PC-3 (cell line): ENCODE measurements at regions of chr4 and their contacts with region 1.

Region 1: DNA sequence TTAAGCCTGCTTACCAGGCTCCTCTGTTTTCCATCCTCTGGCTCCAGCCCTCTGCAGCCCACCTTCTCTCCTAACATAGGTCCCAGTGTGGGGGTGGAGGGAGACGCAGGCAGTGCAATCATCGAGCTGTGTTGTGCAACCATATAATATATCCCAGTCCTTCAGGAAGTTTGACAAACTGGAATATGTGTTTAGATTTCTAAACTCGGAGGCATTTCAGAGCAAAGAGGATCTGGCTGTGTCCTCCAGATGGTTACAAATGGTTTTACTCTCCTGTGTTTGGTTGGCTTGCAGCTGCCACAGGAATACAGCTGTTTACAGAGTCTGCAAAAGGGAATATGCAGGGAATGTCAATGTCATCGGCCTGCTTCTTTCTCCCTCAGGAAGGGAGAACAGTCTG is 195.3 kb upstream of the LNX1 start:
- DNase-seq: no peak
- ATAC-seq: no peak
- H3K4me3 ChIP-seq: no peak overlapping the region
- H3K27ac ChIP-seq: no peak overlapping the region
- H3K4me1 ChIP-seq: peaks cover 21% of the 10 kb centered on the region
- H3K27me3 ChIP-seq: no peaks in the 10 kb centered on the region
- CTCF ChIP-seq: no peak

Region 2: DNA sequence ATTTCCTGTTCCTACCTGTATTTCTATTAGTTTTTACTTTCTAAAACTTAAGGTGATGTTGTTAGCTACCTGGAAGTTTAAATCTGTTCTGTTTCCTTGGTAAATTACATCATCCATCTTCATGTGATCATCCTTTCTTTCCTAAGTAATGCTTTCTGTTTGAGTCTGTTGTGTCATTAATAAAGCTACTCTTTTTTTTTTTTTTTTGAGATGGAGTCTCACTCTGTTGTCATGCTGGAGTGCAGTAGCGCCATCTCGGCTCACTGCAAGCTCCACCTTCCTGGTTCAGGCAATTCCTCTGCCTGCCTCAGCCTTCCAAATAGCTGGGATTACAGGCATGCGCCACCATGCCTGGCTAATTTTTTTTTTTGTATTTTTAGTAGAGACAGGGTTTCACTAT is 335.9 kb before region 1 on chr4:
- CTCF ChIA-PET with region 1: interaction called, 12 read pairs
- POLR2A ChIA-PET with region 1: no interaction called
- intact Hi-C with region 1: no loop called
- DNase-seq: no peak
- ATAC-seq: no peak
- H3K4me3 ChIP-seq: no peak overlapping the region
- H3K27ac ChIP-seq: no peak overlapping the region
- H3K4me1 ChIP-seq: peaks cover 13% of the 10 kb centered on the region
- H3K27me3 ChIP-seq: no peaks in the 10 kb centered on the region
- CTCF ChIP-seq: no peak

Region 3: DNA sequence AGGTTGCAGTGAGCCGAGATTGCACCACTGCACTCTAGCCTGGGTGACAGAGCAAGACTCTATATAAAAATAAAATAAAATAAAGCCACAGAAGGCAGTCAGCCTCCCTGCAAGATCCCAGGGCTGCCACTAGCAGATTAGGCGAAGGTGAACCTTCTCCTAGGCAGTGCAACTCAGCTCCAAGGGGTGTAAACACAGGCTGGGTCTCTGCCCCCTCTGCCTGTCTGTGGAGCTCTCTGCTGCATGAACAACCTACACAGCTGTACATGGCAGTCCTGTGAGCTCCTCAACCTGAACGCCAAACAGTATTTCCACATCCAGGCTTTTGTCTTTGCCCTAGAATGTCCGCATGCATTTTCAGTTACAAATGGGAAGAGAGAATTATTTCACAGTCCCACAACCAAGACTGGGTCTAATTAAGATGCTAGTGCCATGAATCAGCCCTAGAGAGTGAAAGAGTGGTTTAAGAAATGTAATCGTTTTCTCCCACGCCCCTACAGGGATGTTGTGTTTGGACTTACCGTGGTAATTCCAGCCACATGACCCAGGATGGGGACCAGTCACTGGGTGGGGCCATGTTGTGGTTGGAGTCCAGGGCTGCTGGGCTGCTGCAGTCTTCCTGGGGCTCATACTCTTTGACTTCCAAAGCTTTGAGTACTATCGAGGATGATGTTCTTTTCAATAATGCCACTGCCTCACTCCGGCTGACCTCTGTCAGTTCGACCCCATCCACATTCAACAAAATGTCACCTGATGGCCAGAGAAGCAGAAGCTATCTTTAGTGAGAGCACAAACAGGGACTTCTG is 310.2 kb before region 1 on chr4:
- CTCF ChIA-PET with region 1: no interaction called
- POLR2A ChIA-PET with region 1: no interaction called
- intact Hi-C with region 1: loop called (anchors 10 kb)
- DNase-seq: peak; percentile 46
- ATAC-seq: no peak
- H3K4me3 ChIP-seq: no peak overlapping the region
- H3K27ac ChIP-seq: no peak overlapping the region
- H3K4me1 ChIP-seq: peaks cover 27% of the 10 kb centered on the region
- H3K27me3 ChIP-seq: no peaks in the 10 kb centered on the region
- CTCF ChIP-seq: no peak

Region 4: DNA sequence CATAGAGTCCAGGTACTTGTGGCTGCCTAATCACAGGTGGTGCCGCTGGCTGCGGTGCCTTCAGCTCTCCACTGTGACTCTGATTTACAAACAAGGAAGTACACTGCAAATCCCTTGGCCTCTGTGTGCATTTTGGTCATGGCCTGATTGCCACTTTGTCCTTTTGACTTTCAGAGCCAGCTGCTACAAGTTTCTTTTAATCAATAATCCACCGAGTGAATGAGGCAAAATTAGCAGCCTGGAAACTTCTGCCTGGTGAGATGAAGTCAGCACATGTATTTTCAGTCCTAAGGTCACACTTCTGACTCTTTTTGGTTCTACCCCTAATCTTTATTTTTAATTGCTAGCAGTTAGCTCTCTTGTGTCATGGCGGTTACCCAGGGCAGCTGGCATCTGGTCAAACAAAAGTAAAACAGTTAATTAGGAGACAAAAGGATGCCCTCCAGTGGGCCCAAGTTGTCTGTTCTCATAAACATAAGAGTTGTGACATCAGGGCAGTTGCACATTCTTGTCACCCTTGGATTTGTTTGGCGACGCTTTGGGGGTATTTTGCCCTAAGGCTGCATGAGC is 133.1 kb before region 1 on chr4:
- CTCF ChIA-PET with region 1: no interaction called
- POLR2A ChIA-PET with region 1: no interaction called
- intact Hi-C with region 1: loop called (anchors 5 kb)
- DNase-seq: no peak
- ATAC-seq: no peak
- H3K4me3 ChIP-seq: no peak overlapping the region
- H3K27ac ChIP-seq: no peak overlapping the region
- H3K4me1 ChIP-seq: peaks cover 15% of the 10 kb centered on the region; the same call in 1 of the 2 replicates
- H3K27me3 ChIP-seq: no peaks in the 10 kb centered on the region
- CTCF ChIP-seq: 0 out of 2 replicates have a peak, but pooled peaks have one; percentile 16

Region 5: DNA sequence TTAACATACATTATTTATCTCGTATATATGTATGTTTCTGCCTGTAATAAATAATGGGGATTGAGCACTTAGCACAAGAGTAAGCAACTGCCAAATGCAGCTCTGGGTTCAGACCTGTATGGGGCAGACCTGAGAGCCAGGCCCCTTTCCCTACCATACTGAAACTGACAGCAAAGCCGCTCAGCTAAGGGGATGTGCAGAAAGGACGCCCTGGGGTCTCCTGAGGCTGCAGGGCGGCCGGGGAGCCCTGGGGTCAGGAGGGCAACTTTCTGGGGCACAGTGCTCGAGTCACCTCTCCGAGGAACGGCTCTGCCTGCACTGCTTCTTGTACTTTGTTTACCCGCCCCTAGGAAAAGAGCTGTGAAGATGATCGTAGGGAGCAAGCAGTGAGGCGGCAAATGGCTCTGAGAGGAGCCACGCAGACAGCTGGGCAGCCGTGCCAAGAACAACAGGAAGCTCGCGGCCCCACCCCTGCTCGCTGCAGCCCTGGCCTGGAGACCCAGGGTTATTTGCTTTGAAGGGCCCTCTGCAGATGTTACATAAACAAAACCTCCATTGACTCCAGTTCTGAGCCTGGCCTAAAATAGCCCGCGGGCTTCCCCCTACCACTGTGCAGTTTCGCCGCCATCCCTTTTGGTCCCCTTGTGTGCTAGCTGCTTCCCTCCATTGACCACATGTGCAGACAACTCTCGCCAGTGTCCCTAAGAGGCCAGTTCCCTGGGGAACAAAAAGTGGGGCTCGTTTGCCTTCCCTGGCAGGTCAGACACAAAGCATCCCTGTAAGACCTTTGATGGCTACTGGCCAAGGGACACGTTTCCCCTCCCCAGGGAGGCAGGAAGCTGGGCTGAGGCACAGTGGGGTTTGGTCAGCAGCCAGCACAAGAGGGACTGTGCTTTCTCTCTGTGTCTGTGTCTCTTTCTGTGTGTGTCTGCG is 84.0 kb before region 1 on chr4:
- CTCF ChIA-PET with region 1: interaction called, 4 read pairs
- POLR2A ChIA-PET with region 1: no interaction called
- intact Hi-C with region 1: loop called (anchors 2 kb)
- DNase-seq: peak; percentile 86
- ATAC-seq: peak; percentile 88
- H3K4me3 ChIP-seq: peak overlapping the region; percentile 63
- H3K27ac ChIP-seq: peak overlapping the region; percentile 88
- H3K4me1 ChIP-seq: peaks cover 34% of the 10 kb centered on the region
- H3K27me3 ChIP-seq: no peaks in the 10 kb centered on the region
- CTCF ChIP-seq: 0 out of 2 replicates have a peak, but pooled peaks have one; percentile 15

Region 6: DNA sequence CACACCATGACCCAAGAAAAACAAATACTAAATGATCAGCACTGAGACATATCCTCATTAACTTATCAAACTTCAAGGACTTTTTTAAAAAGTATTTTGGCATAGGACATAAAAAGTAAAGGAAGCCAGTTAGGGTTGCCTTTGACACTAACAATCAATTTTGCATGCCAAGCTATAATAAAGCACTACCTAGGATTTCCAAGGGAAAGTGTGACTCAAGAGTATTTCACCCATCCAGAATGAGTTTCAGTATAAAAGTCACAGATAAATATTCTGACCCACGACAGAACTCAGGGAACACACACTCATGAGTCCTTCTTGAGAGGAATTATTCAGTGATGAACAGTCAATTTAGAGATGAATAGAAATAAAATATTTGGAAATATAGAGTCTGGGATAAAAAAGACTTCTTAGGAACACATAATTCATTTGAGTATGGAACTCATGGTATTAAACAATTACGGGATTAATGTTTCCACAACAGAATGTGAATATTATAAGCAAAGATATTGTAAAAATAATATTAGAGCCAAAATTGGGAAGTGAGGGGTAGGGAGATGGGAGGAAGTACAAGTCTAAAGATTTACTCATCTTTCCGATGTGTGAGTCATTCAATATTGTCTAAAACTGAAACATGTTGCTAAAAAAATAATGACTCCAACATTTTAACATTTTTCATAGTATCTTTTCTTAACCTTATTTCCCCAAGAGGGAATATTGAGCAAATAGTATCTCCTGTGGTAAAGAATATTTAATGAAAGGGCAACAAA is 51.9 kb before region 1 on chr4:
- CTCF ChIA-PET with region 1: no interaction called
- POLR2A ChIA-PET with region 1: no interaction called
- intact Hi-C with region 1: loop called (anchors 2 kb)
- DNase-seq: peak; percentile 68
- ATAC-seq: peak; percentile 87
- H3K4me3 ChIP-seq: peak overlapping the region; percentile 8; the same call in 1 of the 2 replicates
- H3K27ac ChIP-seq: peak overlapping the region; percentile 81
- H3K4me1 ChIP-seq: peaks cover 16% of the 10 kb centered on the region
- H3K27me3 ChIP-seq: no peaks in the 10 kb centered on the region
- CTCF ChIP-seq: no peak